H1 (cell line): ENCODE measurements at regions of chr12 and their contacts with region 1.

Region 1: GRCh38 chr12:50055831-50056638 is 1.4 kb upstream of the ASIC1 start:
- DNase-seq: peak in 1 of 2 experiments; percentile 82
- H3K4me3 ChIP-seq: peak overlapping the region in 2 of 4 experiments; percentile 17 to 74; a peak in 5 of 8 replicates
- H3K27ac ChIP-seq: no peak overlapping the region
- H3K4me1 ChIP-seq: peaks cover 3 to 16% (median 10%) of the 10 kb centered on the region in 4 experiments
- H3K27me3 ChIP-seq: peaks cover 35 to 91% (median 73%) of the 10 kb centered on the region in 4 experiments
- CTCF ChIP-seq: peak; percentile 90 to 96 (median 91)
- EP300 ChIP-seq: no peak
- POLR2A ChIP-seq: no peak
- RAD21 ChIP-seq: peak; percentile 89 to 92

Region 2: GRCh38 chr12:49959570-49960465 is 96.2 kb before region 1 on chr12:
- CTCF ChIA-PET with region 1: interaction called, 420 read pairs
- POLR2A ChIA-PET with region 1: interaction called, 4 read pairs
- DNase-seq: peak in 1 of 2 experiments; percentile 60
- H3K4me3 ChIP-seq: peak overlapping the region in 1 of 4 experiments; percentile 59; a peak in 1 of 8 replicates
- H3K27ac ChIP-seq: no peak overlapping the region
- H3K4me1 ChIP-seq: peaks cover 4 to 24% (median 17%) of the 10 kb centered on the region in 4 experiments
- H3K27me3 ChIP-seq: peaks cover 12 to 67% (median 55%) of the 10 kb centered on the region in 4 experiments
- CTCF ChIP-seq: no peak
- EP300 ChIP-seq: no peak
- POLR2A ChIP-seq: no peak; a peak in 1 of 3 replicates
- RAD21 ChIP-seq: no peak

Region 3: DNA sequence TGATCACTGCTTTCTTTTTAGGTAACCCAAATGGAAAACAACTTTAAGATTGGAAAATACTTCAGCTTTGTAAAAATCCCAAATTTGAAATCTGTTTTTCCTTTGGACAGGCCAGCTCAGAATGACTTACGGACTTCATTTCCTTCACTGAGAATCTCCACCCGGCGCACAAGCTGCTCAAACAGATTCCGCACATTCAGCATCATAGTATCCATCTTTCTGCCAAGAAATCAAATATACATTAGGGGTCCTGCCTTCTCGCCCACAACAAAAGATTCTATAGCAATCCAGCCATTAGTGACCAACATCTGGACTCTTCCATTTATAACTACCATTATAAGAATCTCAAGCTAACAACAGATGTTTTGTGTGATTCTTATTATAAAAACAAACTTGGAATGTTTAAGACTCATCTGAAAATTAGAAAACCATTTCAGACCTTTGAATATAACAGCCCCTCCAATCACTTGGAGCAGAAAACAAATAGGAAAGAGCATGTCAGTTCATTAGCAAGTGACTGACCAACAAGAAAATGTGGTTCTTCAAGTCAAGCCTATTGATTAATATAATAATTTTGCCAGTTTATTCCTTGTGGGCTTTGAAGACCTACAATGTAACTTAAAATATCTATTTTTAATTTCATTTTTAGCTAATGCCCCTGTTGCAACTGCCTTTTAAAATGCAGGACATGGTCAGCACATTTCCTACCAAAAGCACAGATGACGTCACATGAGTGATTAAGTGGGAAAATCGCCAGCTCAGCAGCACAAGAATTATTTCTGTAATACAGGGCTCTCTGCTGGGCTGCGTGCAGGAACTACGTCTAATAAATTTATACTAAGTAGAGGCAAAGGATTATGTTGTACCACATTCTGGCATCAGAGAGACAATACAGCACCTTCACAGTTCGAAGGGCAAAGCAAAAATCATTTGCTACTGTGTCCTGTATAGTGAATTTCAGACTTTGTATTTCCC is 39.2 kb before region 1 on chr12:
- CTCF ChIA-PET with region 1: interaction called, 20 read pairs
- POLR2A ChIA-PET with region 1: no interaction called
- DNase-seq: no peak
- H3K4me3 ChIP-seq: no peak overlapping the region
- H3K27ac ChIP-seq: no peak overlapping the region
- H3K4me1 ChIP-seq: peaks cover 0 to 2% (median 0%) of the 10 kb centered on the region in 4 experiments; a peak in 1 of 7 replicates
- H3K27me3 ChIP-seq: no peaks in the 10 kb centered on the region
- CTCF ChIP-seq: no peak
- EP300 ChIP-seq: no peak
- POLR2A ChIP-seq: no peak
- RAD21 ChIP-seq: no peak

Region 4: DNA sequence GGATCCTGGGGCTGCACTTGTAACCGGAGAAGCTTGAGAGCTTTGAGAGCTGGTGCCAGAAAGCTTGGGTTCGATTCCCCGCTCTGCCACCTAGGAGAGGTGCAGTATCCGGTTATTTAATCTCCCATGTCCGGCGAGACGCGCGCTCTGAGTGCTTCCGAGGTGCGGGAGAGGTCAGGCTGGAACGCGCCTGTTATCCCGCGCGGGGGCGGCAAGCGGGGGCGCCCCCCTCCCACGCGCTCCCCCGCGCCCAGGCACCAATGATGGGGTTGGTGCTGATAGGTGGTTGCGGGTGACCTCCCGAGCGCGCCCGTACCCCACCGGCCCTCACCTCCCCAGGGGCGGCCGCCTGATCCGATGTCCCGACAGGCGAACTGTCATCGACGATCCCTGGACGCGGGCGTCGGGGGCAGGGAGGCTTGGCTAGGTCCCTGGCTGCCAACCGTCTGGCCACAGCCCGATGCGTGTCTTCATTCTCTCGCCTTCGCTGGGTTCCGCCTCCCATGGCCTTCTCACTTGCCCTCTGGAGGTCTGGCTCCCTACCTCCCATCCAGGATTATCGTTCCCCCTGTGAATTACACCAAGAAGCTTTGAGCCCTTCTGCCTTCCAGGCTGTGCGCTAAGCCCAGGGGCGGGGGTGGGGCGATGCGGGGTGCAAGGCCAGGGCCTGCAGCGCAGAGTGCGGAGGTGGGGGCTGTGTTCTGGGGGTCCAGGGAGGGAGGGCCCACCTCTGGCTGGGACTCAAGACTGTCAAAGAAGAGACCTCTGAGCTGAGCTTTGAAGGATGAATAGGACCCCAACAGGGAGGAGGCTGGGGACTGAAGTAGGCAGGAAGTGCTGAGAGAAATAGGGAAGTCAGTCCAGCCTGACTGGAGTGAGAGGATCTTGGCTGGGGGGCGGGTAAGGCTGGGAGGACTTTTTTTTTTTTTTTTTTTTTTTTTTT is 23.1 kb before region 1 on chr12:
- CTCF ChIA-PET with region 1: interaction called, 296 read pairs
- POLR2A ChIA-PET with region 1: interaction called, 7 read pairs
- DNase-seq: peak in 1 of 2 experiments; percentile 71
- H3K4me3 ChIP-seq: peak overlapping the region; percentile 32 to 67 (median 65)
- H3K27ac ChIP-seq: no peak overlapping the region
- H3K4me1 ChIP-seq: peaks cover 0 to 3% (median under 1%) of the 10 kb centered on the region in 4 experiments; a peak in 1 of 7 replicates
- H3K27me3 ChIP-seq: peaks cover 0 to 2% (median 0%) of the 10 kb centered on the region in 4 experiments; a peak in 3 of 7 replicates
- CTCF ChIP-seq: no peak
- EP300 ChIP-seq: no peak
- POLR2A ChIP-seq: no peak
- RAD21 ChIP-seq: no peak

Region 5: DNA sequence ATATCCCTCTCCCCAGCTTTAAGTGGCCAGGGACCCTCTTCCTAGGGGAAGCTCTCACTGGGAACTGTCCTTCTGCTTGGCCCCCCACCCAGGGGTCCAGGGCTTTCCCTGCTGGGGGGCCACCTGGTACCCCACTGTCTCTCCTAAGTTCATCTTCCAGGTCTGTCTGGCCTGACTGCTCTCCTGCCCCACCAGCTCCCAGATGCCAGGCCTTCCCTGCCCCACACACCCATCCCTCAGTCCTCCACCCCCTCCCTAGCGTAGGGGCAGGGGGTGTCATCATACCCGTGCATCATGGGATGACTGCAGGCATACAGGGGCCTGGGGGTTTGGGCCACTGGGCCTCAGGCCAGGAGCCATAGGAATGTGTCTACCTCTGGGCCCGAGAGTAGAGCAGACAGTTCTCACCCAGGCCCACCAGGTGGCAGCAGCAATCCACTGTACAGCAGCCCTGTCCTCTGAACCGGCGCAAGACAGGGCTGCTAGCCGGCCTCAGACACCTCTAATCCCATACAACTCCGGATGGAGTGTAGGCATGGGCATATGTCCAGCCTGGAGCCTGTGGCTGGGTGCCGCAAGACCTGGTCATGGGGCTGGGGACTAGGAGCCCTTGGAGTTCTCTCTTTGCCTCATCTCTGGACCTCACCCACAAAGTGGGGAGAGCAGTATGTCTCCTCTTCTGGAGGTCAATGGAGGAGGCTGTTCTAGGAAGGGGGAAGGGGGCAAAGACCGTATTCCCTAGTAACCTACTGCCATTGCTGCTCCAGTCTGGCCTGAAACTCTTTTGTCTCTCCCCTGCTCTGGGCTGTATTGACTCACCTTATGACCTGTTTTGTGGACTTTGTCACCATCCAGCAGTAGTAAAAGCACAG is 19.1 kb after region 1 on chr12:
- CTCF ChIA-PET with region 1: interaction called, 115 read pairs
- POLR2A ChIA-PET with region 1: no interaction called
- DNase-seq: peak in 1 of 2 experiments; percentile 93
- H3K4me3 ChIP-seq: no peak overlapping the region
- H3K27ac ChIP-seq: no peak overlapping the region
- H3K4me1 ChIP-seq: peaks cover 0 to 6% (median 3%) of the 10 kb centered on the region in 4 experiments; a peak in 5 of 7 replicates
- H3K27me3 ChIP-seq: peaks cover 0 to 4% (median under 1%) of the 10 kb centered on the region in 4 experiments; a peak in 2 of 7 replicates
- CTCF ChIP-seq: peak; percentile 92 to 94 (median 94)
- EP300 ChIP-seq: no peak
- POLR2A ChIP-seq: no peak
- RAD21 ChIP-seq: peak; percentile 96 to 97